Common myeloid progenitor, CD34-positive (primary cell): ENCODE measurements at regions of chr19 and their contacts with region 1.

Region 1: DNA sequence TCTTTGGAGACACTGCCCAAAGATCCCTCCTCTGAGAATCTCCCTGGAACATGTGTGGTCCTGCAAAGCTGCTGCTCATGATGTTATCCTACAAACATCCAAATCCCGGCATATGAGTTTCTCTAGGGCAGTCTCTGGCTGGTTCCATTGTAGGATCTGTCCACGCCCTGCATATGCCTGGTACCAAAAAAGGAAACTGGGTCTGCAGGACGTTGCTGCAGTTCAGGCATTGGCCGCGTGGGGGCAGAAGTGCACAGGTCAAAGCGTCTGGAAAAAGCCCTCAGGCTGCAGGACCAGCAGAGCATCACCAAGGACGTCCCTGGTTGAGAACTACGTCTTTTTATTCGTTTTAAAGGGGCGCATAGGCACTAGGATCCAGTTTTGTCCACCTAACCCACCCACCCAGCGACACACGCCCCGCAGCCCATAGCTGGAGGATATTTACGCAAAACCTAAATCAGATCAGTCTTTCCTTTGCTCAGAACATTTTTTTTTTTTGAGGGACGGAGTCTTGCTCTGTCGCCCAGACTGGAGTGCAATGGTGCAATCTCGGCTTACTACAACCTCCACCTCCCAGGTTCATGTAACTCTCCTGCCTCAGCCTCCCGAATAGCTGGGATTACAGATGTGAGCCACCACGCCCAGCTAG is 12.9 kb upstream of the ZNF564 start:
- DNase-seq: peak; percentile 82 to 91 (median 85)
- H3K4me3 ChIP-seq: no peak overlapping the region
- H3K27ac ChIP-seq: no peak overlapping the region
- H3K4me1 ChIP-seq: peaks cover 0 to 2% (median 0%) of the 10 kb centered on the region in 4 experiments
- H3K27me3 ChIP-seq: no peaks in the 10 kb centered on the region

Region 2: DNA sequence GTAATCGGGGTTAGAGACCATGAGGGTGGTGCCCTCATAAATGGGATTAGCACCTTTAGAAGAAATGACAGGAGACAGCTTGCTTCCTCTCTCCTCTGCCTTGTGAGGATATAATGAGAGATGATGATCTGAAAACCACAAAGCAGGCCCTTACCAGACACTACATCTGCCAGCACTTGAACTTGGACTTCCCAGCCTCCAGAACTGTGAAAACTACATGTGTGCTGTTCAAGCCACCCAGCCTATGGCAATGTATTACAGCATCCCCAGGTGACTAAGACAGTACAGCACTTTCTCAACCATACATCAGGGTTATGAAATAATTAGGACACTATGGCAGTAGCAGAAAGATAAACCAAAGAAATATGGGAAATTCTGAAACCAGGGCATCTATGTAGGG is 20.3 kb before region 1 on chr19:
- CTCF ChIA-PET with region 1: no interaction called
- POLR2A ChIA-PET with region 1: no interaction called
- DNase-seq: peak in 2 of 3 donors; percentile 50 to 64
- H3K4me3 ChIP-seq: peak overlapping the region in 4 of 7 experiments; percentile 23 to 58 (median 42)
- H3K27ac ChIP-seq: peak overlapping the region; percentile 41 to 77
- H3K4me1 ChIP-seq: peaks cover 0 to 18% (median 11%) of the 10 kb centered on the region in 4 experiments
- H3K27me3 ChIP-seq: no peaks in the 10 kb centered on the region

Region 3: DNA sequence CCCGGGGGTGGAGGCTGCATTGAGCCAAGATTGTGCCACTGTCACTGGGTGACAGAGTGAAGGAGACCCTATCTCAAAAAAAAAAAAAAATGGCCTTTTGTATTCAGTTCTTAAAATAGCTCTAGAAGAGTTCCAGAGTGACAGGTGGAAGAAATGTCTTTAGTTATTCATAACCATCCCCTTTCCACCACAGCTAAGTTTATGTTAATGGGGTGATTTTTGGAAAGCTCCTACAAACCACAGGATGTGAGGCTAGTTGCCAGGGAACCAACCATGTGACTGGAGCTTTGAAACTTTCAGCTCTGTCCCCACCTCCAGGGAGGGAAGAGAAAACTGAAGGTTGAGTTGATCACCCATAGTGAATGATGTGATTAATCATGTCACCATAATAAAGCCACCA is 39.6 kb after region 1 on chr19:
- CTCF ChIA-PET with region 1: interaction called, 12 read pairs
- POLR2A ChIA-PET with region 1: no interaction called
- DNase-seq: peak; percentile 58 to 89 (median 87)
- H3K4me3 ChIP-seq: no peak overlapping the region
- H3K27ac ChIP-seq: no peak overlapping the region
- H3K4me1 ChIP-seq: peaks cover 3 to 16% (median 8%) of the 10 kb centered on the region in 4 experiments
- H3K27me3 ChIP-seq: no peaks in the 10 kb centered on the region

Region 4: GRCh38 chr19:12670159-12670928 is 106.2 kb after region 1 on chr19:
- CTCF ChIA-PET with region 1: interaction called, 27 read pairs
- POLR2A ChIA-PET with region 1: no interaction called
- DNase-seq: no peak
- H3K4me3 ChIP-seq: peak overlapping the region; percentile 83 to 98 (median 96)
- H3K27ac ChIP-seq: peak overlapping the region; percentile 100
- H3K4me1 ChIP-seq: peaks cover 4 to 46% (median 37%) of the 10 kb centered on the region in 4 experiments
- H3K27me3 ChIP-seq: no peaks in the 10 kb centered on the region